Posterior cingulate gyrus (tissue), 11 donors: ENCODE measurements at regions of chr9 and their contacts with region 1.

Region 1: DNA sequence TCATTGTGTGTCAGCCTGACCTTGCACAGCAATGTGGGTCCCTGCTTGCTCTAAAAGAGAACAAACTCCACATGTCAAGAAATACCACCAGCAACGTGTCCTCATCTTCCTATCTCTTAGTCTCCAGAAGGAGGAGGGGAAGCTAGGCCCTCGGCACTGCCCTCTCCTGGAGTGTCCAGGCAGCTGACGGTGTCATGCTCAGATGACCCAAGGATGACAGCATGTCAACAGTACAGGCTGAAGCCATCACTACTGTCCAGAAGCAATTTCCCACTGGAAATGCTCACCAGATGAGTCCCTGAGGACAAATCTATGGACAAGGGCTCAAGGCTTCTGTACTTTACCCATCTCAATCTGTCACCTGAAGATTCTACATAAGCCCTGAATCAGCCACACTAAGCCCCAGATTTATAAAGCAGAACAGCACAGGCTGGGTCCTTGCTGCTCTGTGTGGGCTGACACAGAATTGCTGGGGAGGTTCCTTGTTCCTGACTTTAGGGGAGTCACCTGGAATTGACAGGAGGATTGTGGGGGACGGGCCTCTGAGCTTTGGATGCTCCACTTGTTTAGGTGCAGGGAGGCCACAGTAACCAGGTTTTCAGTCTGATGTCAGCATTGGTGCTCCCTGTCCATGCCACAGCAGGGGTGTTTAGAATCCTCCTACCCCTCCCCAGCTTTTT is 210.2 kb downstream of the DAB2IP start:
- DNase-seq: peak in 4 of 10 donors; percentile 58 to 92 (median 67)

Region 2: GRCh38 chr9:121326130-121326838 is 535.4 kb before region 1 on chr9:
- intact Hi-C with region 1: no loop called
- DNase-seq: peak in 1 of 10 donors; percentile 21

Region 3: DNA sequence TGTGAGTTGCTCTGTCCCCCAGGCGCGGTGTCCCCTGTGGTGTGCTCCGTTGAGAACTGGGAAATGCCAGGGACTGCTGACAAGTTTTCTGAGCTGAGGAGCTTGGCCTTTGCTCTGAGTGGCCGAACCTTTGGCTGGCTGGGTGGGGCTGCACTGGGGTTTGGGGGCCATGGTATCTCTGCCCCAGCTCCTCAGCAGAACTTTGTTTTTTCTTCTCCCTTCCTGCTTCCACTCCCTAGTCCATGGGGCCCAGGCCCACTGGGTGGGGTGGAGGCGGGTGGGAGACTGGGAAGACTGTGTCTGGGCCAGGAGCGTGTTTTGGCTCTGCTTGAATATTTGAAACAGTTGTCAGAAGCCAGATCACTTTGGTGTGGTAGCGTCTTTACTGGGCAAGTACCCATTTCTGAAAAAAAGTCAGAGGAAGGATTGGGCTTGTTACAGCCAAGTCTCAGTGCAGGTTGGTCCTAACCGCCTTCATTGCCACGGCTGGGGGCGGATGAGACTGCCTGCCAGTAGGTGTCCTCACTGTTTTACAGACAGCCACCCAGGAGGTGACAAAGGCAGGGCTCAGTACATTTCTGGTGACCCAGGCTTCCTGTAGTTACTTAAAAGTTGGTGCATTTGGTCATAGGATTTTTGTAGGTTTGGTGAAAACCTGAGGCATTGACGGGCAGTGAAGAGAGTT is 117.5 kb before region 1 on chr9:
- intact Hi-C with region 1: loop called (anchors 10 kb)
- DNase-seq: peak; percentile 46 to 93 (median 66)

Region 4: GRCh38 chr9:121839726-121840500 is 21.7 kb before region 1 on chr9:
- intact Hi-C with region 1: no loop called
- DNase-seq: no peak